Mammary epithelial cell (primary cell): ENCODE measurements at regions of chr20 and their contacts with region 1.

Region 1: GRCh38 chr20:7375905-7376304 is 564.4 kb downstream of the HAO1 start:
- DNase-seq: no peak
- H3K4me3 ChIP-seq: no peak overlapping the region
- H3K27ac ChIP-seq: no peak overlapping the region
- H3K4me1 ChIP-seq: peaks cover 13% of the 10 kb centered on the region
- H3K27me3 ChIP-seq: no peaks in the 10 kb centered on the region
- CTCF ChIP-seq: peak; percentile 53 to 55

Region 2: DNA sequence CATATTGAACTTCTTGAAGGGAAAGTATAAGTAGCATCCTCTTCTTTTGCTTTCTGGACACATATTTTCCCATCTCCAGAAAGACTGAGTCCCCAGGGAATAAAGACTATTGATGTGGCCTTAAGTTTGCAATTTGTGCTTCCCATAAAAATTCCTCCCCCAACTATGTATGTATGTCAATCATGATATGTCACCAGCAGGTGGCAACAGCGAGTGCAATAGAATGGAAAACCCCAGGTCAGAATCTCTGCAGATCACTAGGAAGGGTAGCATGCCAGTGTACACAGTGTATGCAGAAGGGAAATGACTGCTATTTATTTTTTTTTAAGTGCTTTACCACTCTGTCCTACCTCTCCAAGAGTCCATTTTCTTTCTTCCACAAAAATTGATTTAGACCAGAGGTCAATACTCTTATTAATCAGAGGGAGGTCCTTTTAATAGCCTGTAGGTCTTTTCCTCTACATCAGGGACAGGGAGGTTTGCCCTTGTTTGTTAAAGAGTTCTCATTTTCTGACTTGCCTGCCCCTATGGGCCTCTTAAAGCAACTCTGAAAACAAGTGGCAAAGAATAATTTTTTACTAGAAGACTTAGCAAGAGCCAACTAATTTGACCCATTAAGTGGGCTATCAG is 547.0 kb before region 1 on chr20:
- CTCF ChIA-PET with region 1: no interaction called
- dilution Hi-C with region 1: no loop called
- in situ Hi-C with region 1: no loop called
- intact Hi-C with region 1: loop called (anchors 2 kb)
- DNase-seq: peak; percentile 68
- H3K4me3 ChIP-seq: no peak overlapping the region
- H3K27ac ChIP-seq: peak overlapping the region; percentile 39
- H3K4me1 ChIP-seq: peaks cover 11% of the 10 kb centered on the region
- H3K27me3 ChIP-seq: no peaks in the 10 kb centered on the region
- CTCF ChIP-seq: peak; percentile 73 to 76

Region 3: DNA sequence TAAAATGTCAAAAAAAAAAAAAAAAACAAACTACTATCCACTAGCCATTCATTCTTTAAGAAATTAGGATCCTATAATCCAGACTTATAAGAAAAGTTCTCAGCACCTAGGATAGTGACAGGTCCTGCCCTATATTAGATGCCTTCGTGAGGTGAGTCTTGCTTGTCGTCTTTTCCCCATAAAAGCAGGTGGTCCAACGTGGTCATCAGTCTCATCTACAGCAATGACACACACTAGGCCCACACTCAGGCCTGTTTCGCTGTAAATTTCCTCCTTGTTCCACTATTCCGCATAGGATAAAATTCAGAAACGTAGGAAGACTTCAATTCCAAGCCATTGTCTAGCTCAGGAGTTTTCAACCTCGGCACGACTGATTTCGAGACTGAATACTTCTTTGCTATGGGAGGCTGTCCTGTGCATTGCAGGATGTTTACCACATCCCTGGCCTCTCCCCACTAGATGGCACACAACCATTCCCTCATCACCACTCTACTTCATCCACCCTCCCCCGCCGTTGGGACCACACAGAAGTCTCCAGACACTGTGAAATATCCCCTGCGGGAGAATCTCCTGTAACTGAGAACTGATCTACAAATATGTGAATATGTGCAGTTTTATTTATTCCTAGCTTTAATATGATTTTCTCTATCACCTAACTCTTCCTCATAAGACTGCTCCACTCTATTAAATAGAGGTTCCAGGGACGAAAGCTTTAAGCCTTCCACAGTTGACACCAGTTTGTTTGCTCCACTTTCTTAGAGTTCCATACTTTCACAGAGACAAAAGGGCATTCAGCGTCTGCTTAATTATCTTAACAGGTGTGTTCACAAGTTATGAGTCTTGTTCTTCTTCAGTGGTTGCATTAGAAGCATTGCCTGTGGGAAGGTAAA is 262.1 kb before region 1 on chr20:
- CTCF ChIA-PET with region 1: no interaction called
- dilution Hi-C with region 1: no loop called
- in situ Hi-C with region 1: loop called in 1 of 2 experiments (anchors 10 kb)
- intact Hi-C with region 1: loop called (anchors 5 kb)
- DNase-seq: peak; percentile 43
- H3K4me3 ChIP-seq: no peak overlapping the region
- H3K27ac ChIP-seq: no peak overlapping the region
- H3K4me1 ChIP-seq: no peaks in the 10 kb centered on the region
- H3K27me3 ChIP-seq: no peaks in the 10 kb centered on the region
- CTCF ChIP-seq: peak; percentile 52 to 76

Region 4: DNA sequence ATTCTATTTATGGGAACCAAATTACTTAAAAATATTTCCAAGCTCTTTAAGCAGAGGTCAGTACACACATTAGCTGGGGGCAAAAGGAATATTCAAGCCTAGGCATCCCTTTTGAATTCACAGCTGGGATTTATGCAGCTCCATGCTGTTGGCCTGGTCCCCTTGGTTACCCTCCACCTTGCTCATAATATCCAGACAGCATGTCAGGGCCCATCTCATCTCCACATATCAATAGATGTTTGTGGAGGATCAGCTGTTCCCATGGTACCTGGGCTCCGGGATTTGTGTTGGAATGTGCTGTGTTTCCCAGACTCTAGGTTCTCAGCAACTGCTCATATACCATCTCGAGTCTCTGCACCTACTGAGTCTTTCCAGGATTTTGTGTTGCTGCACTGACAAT is 73.7 kb before region 1 on chr20:
- CTCF ChIA-PET with region 1: no interaction called
- dilution Hi-C with region 1: no loop called
- in situ Hi-C with region 1: no loop called
- intact Hi-C with region 1: loop called (anchors 5 kb)
- DNase-seq: peak; percentile 57
- H3K4me3 ChIP-seq: no peak overlapping the region
- H3K27ac ChIP-seq: peak overlapping the region; percentile 42
- H3K4me1 ChIP-seq: peaks cover 7% of the 10 kb centered on the region
- H3K27me3 ChIP-seq: no peaks in the 10 kb centered on the region
- CTCF ChIP-seq: no peak